Activated CD4-positive, alpha-beta T cell treated with anti-CD3 and anti-CD28 coated beads, Interleukin-2, amount 10 ng/mL, durations not matched to agents 7 days and 5 days (primary cell): ENCODE measurements at regions of chr10 and their contacts with region 1.

Region 1: DNA sequence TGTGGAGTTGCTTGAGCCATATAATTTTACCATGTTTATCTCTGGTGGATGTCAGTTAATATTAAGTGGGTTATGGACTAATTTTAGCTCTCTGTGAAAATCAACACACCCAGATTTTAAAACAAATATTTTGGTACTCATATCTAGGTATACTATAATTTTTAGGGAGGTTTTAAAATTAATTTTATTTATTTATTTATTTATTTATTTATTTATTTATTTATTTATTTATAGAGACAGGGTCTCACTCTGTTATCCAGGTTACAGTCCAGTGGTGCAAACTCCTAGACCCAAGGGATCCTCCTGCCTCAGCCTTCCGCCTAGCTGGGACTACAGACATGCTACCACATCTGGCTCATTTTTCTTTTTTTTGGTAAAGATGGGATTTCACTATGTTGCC is 7.3 kb upstream of the CREM start:
- DNase-seq: no peak
- H3K4me3 Mint-ChIP-seq: no peak overlapping the region
- H3K27ac Mint-ChIP-seq: no peak overlapping the region
- H3K4me1 Mint-ChIP-seq: peaks cover 8% of the 10 kb centered on the region
- H3K27me3 Mint-ChIP-seq: peaks cover 5% of the 10 kb centered on the region

Region 2: DNA sequence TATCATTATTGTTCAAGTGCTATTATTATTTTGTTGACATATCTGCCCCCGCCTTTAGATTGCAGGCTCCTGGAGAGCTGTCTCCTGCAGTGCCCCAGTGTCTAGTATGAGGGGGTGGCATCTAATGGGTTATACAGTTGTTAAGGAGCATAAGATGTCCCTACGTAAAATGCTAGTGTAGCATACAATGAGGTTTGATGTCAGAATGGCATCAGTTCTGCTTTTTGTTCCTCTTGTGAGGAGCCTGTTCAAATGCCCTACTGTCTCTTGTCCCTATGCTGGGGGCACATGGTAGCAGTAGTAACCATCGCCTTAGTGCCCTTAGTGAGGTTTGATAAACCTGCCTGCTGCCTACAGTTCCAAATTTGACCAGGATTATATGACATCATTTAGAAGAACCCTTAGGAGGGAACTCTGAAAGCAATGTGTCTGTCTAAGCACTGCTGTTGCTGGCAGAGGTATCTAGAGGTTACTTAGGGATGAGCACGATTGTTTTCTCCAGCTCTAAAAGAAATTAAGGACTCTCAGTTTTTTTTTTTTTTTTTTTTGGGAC is 17.0 kb after region 1 on chr10:
- CTCF ChIA-PET with region 1: no interaction called
- POLR2A ChIA-PET with region 1: no interaction called
- DNase-seq: no peak
- H3K4me3 Mint-ChIP-seq: no peak overlapping the region
- H3K27ac Mint-ChIP-seq: peak overlapping the region; percentile 76
- H3K4me1 Mint-ChIP-seq: peaks cover 42% of the 10 kb centered on the region
- H3K27me3 Mint-ChIP-seq: no peaks in the 10 kb centered on the region

Region 3: DNA sequence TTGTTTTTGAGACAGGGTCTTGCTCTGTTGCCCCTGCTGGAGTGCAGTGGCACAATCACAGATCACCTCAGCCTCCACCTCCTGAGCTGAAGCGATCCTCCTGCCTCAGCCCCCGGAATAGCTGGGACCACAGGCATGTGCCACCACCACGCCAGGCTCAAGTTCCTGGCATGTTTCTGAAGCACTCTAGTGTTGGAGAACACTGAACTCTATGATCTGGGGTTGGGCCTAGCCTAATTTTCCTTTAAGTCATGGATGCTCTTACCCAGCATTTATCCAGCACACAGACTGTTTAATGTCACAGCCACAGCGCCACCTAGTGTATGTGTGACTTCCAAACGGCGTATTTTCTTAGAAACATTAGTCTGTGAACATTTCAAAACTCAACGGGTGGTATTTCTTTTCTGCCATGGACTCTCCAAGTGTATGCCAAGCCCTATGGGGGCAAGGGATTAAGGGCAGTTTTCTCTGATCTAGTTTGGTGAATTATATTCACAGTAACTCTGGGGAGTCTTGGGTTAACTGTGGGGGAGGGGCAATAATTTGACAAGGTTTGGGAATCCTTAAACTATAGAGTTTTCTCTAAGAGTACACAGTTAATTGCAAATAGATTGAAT is 99.1 kb after region 1 on chr10:
- CTCF ChIA-PET with region 1: interaction called, 29 read pairs
- POLR2A ChIA-PET with region 1: no interaction called
- DNase-seq: peak; percentile 93
- H3K4me3 Mint-ChIP-seq: no peak overlapping the region
- H3K27ac Mint-ChIP-seq: peak overlapping the region; percentile 78
- H3K4me1 Mint-ChIP-seq: peaks cover 42% of the 10 kb centered on the region
- H3K27me3 Mint-ChIP-seq: no peaks in the 10 kb centered on the region